K562 (cell line): ENCODE measurements at regions of chr20 and their contacts with region 1.

Region 1: DNA sequence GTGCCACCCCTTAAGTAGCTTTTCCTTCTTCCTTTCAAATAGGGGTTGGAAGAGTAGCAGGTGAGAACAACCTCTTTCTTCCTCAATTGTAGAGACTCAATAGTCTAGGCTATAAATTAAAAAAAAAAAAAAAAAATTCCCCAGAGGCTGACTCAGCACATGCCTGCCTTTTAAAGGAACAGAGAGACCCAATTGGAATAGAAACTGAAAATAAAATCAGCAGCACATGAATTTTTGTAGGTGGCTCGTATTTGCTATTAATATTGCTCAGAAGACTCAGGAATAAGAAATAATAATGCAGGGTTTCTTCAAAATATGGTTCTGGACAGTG is 19.3 kb downstream of the TOP1 start:
- DNase-seq: no peak
- ATAC-seq: peak; percentile 27; the same call in 2 of the 3 replicates
- H3K4me3 ChIP-seq: no peak overlapping the region
- H3K27ac ChIP-seq: peak overlapping the region; percentile 82
- H3K4me1 ChIP-seq: peaks cover 21 to 80% of the 10 kb centered on the region in 2 experiments
- H3K27me3 ChIP-seq: no peaks in the 10 kb centered on the region
- CTCF ChIP-seq: no peak
- EP300 ChIP-seq: no peak
- POLR2A ChIP-seq: no peak
- RAD21 ChIP-seq: no peak

Region 2: GRCh38 chr20:41063438-41063837 is 15.5 kb after region 1 on chr20:
- CTCF ChIA-PET with region 1: no interaction called
- POLR2A ChIA-PET with region 1: interaction called, 15 read pairs
- in situ Hi-C with region 1: no loop called
- intact Hi-C with region 1: no loop called
- DNase-seq: no peak
- ATAC-seq: no peak
- H3K4me3 ChIP-seq: no peak overlapping the region
- H3K27ac ChIP-seq: no peak overlapping the region
- H3K4me1 ChIP-seq: peaks cover 0 to 14% of the 10 kb centered on the region in 2 experiments; a peak in 2 of 5 replicates
- H3K27me3 ChIP-seq: no peaks in the 10 kb centered on the region
- CTCF ChIP-seq: no peak
- EP300 ChIP-seq: no peak
- POLR2A ChIP-seq: no peak
- RAD21 ChIP-seq: peak in 1 of 2 experiments; percentile 19; a peak in 1 of 4 replicates

Region 3: DNA sequence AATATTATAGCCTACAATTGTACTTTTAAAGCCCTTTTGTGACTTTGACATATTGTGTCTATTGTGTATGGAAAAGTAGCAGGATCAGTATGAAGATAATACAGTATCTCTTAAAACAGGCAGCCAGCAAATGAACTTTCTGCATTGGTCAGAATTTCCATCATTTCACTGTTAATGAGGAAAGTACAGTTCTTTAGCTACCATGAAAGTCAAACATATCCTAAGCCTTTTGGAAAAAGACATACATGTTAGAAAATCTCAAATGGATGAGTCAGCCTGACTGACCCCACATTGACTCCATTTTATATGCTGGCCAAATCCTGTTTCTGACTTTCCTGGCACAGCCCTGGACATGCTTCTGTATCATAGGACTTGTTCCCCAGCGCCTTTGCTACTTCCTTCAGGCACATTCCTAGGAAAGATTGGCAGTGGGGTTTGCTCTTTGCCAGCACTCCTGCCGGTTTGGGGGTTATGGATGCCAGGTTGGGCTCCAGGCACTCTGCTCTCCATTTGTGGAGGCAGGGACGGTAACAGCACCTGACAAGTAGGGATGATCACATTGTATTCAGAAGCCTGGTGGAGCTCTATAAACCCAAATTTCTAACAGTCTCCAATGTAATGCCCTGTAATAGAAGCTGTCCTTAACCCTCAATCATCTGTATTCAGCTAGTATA is 24.4 kb after region 1 on chr20:
- CTCF ChIA-PET with region 1: no interaction called
- POLR2A ChIA-PET with region 1: interaction called, 5 read pairs
- in situ Hi-C with region 1: no loop called
- intact Hi-C with region 1: loop called (anchors 2 kb)
- DNase-seq: peak in 1 of 4 experiments; percentile 40
- ATAC-seq: peak; percentile 56
- H3K4me3 ChIP-seq: no peak overlapping the region
- H3K27ac ChIP-seq: peak overlapping the region; percentile 63
- H3K4me1 ChIP-seq: peaks cover 14 to 71% of the 10 kb centered on the region in 2 experiments
- H3K27me3 ChIP-seq: no peaks in the 10 kb centered on the region
- CTCF ChIP-seq: no peak
- EP300 ChIP-seq: no peak
- POLR2A ChIP-seq: no peak
- RAD21 ChIP-seq: no peak